HCT116 (cell line): ENCODE measurements at regions of chr2 and their contacts with region 1.

Region 1: DNA sequence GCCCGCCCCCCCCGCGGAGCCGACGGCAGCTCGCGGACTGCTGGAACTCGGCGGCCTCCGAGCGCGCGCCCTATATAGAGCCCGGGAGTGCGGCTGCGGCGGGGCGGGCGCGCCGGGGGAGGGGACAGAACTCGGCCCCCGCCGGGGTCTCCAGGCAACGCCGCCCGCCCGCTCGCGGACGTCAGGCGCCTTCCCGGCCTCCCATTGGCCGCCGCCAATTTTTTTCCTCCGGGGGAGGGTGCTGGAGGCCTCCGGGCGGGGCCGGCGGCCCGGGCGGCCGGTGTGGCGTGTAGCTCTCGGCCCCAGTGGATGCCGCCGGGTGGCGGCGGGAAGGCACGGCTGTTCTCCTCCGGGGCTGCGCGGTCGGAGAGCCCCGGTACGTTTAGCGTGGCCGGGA is at the start of gene ZFP36L2:
- DNase-seq: peak; percentile 86
- ATAC-seq: peak; percentile 75
- H3K4me3 ChIP-seq: peak within 1 kb of the TSS; percentile 84 to 88
- H3K27ac ChIP-seq: peak within 1 kb of the TSS; percentile 96
- H3K4me1 ChIP-seq: peaks cover 43 to 47% of the 10 kb centered on the region in 2 experiments
- H3K27me3 ChIP-seq: no peaks in the 10 kb centered on the region
- CTCF ChIP-seq: no peak
- POLR2A ChIP-seq: peak; percentile 66
- RAD21 ChIP-seq: no peak
- total RNA-seq, gene ZFP36L2: 30.3 TPM

Region 2: DNA sequence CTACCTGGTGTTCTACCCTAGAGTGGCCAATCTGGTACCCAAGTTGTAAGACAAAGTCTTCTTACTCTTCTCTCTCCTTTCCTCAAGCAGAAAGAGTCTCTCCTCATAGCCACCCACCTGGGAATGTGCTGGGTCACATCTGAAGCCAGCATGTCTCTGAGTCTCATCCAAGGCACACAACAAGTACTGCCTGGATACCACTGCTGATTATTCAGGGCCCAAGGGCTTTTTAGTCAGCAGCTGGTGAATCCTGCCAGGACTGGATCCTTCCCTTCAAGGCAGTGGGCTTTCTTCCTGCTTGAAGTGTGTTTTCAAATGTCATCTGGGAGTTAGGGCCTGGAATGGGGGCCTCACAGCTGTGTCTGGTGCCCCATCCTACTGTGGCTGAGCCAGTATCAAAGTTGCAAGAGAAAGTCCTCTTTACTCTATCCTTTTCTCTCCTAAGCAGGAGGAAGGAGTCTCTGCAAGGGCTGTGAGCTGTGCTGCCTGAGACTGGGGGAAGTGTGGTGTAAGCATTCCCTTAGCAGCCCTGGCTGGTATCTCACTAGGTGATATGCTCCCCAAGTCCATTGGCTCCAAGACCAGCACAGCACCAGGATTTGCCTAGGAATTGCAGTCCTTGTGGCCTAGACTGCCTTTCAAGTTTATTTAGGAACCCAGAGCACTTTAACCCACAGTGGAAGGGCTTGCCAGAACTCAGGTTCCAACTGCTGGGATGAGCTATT is 489.8 kb before region 1 on chr2:
- CTCF ChIA-PET with region 1: no interaction called
- POLR2A ChIA-PET with region 1: no interaction called
- RAD21 ChIA-PET with region 1: no interaction called
- intact Hi-C with region 1: no loop called
- DNase-seq: no peak
- ATAC-seq: no peak
- H3K4me3 ChIP-seq: no peak overlapping the region
- H3K27ac ChIP-seq: no peak overlapping the region
- H3K4me1 ChIP-seq: no peaks in the 10 kb centered on the region
- H3K27me3 ChIP-seq: no peaks in the 10 kb centered on the region
- CTCF ChIP-seq: no peak
- POLR2A ChIP-seq: no peak
- RAD21 ChIP-seq: no peak

Region 3: GRCh38 chr2:42859006-42859552 is 367.5 kb before region 1 on chr2:
- CTCF ChIA-PET with region 1: interaction called, 3 read pairs
- POLR2A ChIA-PET with region 1: interaction called, 7 read pairs
- RAD21 ChIA-PET with region 1: no interaction called
- intact Hi-C with region 1: loop called (anchors 2 kb)
- DNase-seq: peak; percentile 69
- ATAC-seq: peak; percentile 75
- H3K4me3 ChIP-seq: no peak overlapping the region
- H3K27ac ChIP-seq: no peak overlapping the region
- H3K4me1 ChIP-seq: no peaks in the 10 kb centered on the region
- H3K27me3 ChIP-seq: no peaks in the 10 kb centered on the region
- CTCF ChIP-seq: peak; percentile 87 to 96 (median 91)
- POLR2A ChIP-seq: no peak
- RAD21 ChIP-seq: peak; percentile 93

Region 4: GRCh38 chr2:42974721-42975717 is 251.5 kb before region 1 on chr2:
- CTCF ChIA-PET with region 1: interaction called, 17 read pairs
- POLR2A ChIA-PET with region 1: no interaction called
- RAD21 ChIA-PET with region 1: interaction called, 3 to 4 read pairs
- intact Hi-C with region 1: loop called (anchors 1 kb)
- DNase-seq: peak; percentile 6
- ATAC-seq: peak; percentile 92
- H3K4me3 ChIP-seq: peak overlapping the region in 1 of 2 experiments; percentile 11; a peak in 1 of 4 replicates
- H3K27ac ChIP-seq: no peak overlapping the region
- H3K4me1 ChIP-seq: peaks cover 0 to 4% of the 10 kb centered on the region in 2 experiments; a peak in 1 of 4 replicates
- H3K27me3 ChIP-seq: no peaks in the 10 kb centered on the region
- CTCF ChIP-seq: peak; percentile 83 to 86 (median 84)
- POLR2A ChIP-seq: no peak
- RAD21 ChIP-seq: peak; percentile 97

Region 5: GRCh38 chr2:43131024-43131889 is 95.3 kb before region 1 on chr2:
- CTCF ChIA-PET with region 1: interaction called, 35 read pairs
- POLR2A ChIA-PET with region 1: interaction called, 7 read pairs
- RAD21 ChIA-PET with region 1: interaction called, 3 to 7 read pairs
- intact Hi-C with region 1: loop called (anchors 1 kb)
- DNase-seq: peak; percentile 89
- ATAC-seq: peak; percentile 80
- H3K4me3 ChIP-seq: peak overlapping the region; percentile 25 to 41
- H3K27ac ChIP-seq: peak overlapping the region; percentile 65
- H3K4me1 ChIP-seq: peaks cover 20 to 23% of the 10 kb centered on the region in 2 experiments
- H3K27me3 ChIP-seq: no peaks in the 10 kb centered on the region
- CTCF ChIP-seq: peak in 2 of 3 experiments; percentile 62 to 71; a peak in 4 of 6 replicates
- POLR2A ChIP-seq: no peak
- RAD21 ChIP-seq: no peak

Region 6: DNA sequence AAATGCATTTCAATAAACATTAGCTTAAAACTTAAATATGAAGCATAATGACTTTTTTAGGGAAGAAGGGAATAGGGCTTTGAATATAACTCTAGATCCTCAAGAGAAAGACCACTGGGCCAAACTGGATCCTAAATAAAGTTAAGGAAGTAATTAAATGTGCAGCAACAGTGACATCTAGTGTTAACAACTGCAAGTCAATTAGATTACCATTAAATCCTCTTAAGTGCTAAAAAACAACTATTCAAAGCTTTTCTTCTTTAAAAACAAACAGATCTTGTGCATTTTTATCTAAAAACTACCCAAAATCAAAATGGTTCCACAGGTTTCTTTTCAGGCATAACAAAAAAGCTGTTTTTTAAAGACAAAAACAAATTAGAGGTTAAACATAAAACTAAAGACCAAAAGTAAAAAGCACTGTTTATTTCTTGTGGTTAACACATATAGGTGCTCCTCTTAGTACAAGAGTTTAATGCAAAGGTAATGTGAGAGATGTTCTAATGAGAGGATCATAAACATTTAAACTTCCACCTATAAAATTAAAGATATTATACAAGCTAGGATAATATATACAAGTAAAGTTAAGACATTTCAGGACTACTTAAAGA is 257.9 kb after region 1 on chr2:
- CTCF ChIA-PET with region 1: interaction called, 20 read pairs
- POLR2A ChIA-PET with region 1: interaction called, 5 read pairs
- RAD21 ChIA-PET with region 1: no interaction called
- intact Hi-C with region 1: loop called (anchors 2 kb)
- DNase-seq: peak; percentile 73
- ATAC-seq: peak; percentile 60; the same call in 1 of the 2 replicates
- H3K4me3 ChIP-seq: no peak overlapping the region
- H3K27ac ChIP-seq: no peak overlapping the region
- H3K4me1 ChIP-seq: peaks cover 0 to 5% of the 10 kb centered on the region in 2 experiments; a peak in 1 of 4 replicates
- H3K27me3 ChIP-seq: no peaks in the 10 kb centered on the region
- CTCF ChIP-seq: peak; percentile 43 to 78 (median 73); a peak in 5 of 6 replicates
- POLR2A ChIP-seq: no peak
- RAD21 ChIP-seq: peak; percentile 87

Region 7: GRCh38 chr2:43524177-43524965 is 297.8 kb after region 1 on chr2:
- CTCF ChIA-PET with region 1: no interaction called
- POLR2A ChIA-PET with region 1: no interaction called
- RAD21 ChIA-PET with region 1: no interaction called
- intact Hi-C with region 1: no loop called
- DNase-seq: no peak
- ATAC-seq: no peak
- H3K4me3 ChIP-seq: no peak overlapping the region
- H3K27ac ChIP-seq: no peak overlapping the region
- H3K4me1 ChIP-seq: no peaks in the 10 kb centered on the region
- H3K27me3 ChIP-seq: no peaks in the 10 kb centered on the region
- CTCF ChIP-seq: peak in 2 of 3 experiments; percentile 47 to 52; a peak in 4 of 6 replicates
- POLR2A ChIP-seq: no peak
- RAD21 ChIP-seq: no peak